MCF 10A (cell line): ENCODE measurements at regions of chr2 and their contacts with region 1.

Region 1: GRCh38 chr2:156763174-156763573 is 327.0 kb downstream of the GPD2 start:
- DNase-seq: no peak
- H3K4me3 Mint-ChIP-seq: no peak overlapping the region
- H3K27ac Mint-ChIP-seq: no peak overlapping the region
- H3K4me1 Mint-ChIP-seq: no peaks in the 10 kb centered on the region
- H3K27me3 Mint-ChIP-seq: no peaks in the 10 kb centered on the region
- CTCF ChIP-seq: no peak

Region 2: GRCh38 chr2:156175957-156176356 is 587.2 kb before region 1 on chr2:
- CTCF ChIA-PET with region 1: no interaction called
- POLR2A ChIA-PET with region 1: no interaction called
- intact Hi-C with region 1: no loop called
- DNase-seq: no peak
- H3K4me3 Mint-ChIP-seq: no peak overlapping the region
- H3K27ac Mint-ChIP-seq: no peak overlapping the region
- H3K4me1 Mint-ChIP-seq: no peaks in the 10 kb centered on the region
- H3K27me3 Mint-ChIP-seq: no peaks in the 10 kb centered on the region
- CTCF ChIP-seq: no peak

Region 3: GRCh38 chr2:156635646-156636045 is 127.5 kb before region 1 on chr2:
- CTCF ChIA-PET with region 1: no interaction called
- POLR2A ChIA-PET with region 1: no interaction called
- intact Hi-C with region 1: loop called (anchors 5 kb)
- DNase-seq: no peak
- H3K4me3 Mint-ChIP-seq: no peak overlapping the region
- H3K27ac Mint-ChIP-seq: no peak overlapping the region
- H3K4me1 Mint-ChIP-seq: no peaks in the 10 kb centered on the region
- H3K27me3 Mint-ChIP-seq: no peaks in the 10 kb centered on the region
- CTCF ChIP-seq: no peak